Right ventricle myocardium inferior (tissue), 1 donor: ENCODE measurements at regions of chr1 and their contacts with region 1.

Region 1: GRCh38 chr1:41444246-41444645 is 40.2 kb downstream of the EDN2 start:
- DNase-seq: no peak
- ATAC-seq: no peak

Region 2: GRCh38 chr1:41484372-41485241 is 40.4 kb after region 1 on chr1 and contains the start of gene EDN2:
- intact Hi-C with region 1: loop called (anchors 5 kb)
- DNase-seq: peak; percentile 78
- ATAC-seq: peak; percentile 77
- total RNA-seq, gene EDN2: not detected

Region 3: DNA sequence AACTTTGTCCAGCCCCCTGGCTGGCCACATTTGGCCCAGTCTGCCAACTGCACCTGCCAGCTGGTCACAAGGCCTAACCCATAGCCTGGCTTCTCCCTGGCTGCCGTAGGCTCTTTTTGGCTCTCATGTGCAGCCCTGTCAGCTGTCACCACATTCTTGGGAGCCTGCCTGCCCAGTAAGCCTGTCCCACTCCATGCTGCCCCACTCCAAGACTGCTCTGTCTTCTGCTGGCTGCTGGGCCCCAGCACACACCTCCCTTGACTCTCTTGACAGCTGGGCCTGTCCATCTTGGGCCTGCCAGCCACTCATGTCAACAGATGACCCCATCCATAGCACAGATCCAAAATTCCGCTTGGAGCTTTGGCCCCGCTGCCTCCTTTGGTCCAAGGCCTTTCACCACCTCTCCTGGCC is 114.5 kb after region 1 on chr1:
- intact Hi-C with region 1: no loop called
- DNase-seq: peak; percentile 84
- ATAC-seq: peak; percentile 96